Left lung (tissue), 14 donors: ENCODE measurements at regions of chr5 and their contacts with region 1.

Region 1: DNA sequence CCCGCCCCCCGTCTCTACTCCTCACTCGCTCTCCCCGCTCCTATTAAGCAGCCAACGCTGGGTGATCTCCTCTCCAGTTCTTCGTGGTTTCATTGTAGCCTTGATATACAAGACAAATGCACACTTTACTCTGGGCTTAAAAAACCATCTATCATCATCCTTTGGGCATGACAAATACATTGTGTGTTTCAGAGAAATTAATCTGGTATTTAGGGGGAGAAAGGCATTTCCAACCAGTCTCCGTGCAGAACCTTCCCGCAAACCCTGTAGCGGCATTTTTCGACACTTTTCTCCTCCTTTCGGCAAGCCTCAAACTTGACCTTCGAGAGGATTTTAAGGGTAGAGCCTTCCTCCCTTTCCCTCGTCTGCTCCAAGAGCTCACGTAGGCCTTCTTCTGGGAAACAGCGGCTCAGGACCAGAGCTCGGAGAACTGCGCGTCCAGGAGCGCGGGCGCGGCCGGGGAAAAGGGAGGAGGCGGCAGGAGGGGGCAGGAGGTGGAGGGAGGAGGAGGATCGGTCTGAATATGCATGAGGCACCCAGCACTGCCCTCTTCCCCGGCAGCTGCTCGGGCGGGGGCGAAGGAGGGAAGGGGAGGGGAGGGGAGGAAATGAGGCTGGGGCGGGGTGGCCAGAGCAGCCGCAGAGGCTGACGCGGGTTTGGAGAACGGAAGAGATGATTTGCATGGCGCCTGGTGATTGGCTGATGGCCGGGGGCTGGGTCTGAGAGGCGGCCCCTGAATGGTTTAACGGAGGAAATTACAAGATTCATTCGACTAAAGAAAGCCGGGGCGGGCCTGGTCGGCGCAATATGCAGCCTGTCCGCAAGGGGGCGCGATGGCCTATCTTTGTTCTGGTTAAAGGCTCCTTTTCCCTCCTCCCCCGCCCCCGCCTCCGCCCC is 127.5 kb downstream of the TMEM161B start:
- DNase-seq: peak; percentile 87 to 95 (median 92)
- ATAC-seq: peak; percentile 95
- H3K4me3 ChIP-seq: peak overlapping the region; percentile 18 to 38
- H3K27ac ChIP-seq: peak overlapping the region in 1 of 2 donors; percentile 37
- H3K4me1 ChIP-seq: peaks cover 5 to 25% of the 10 kb centered on the region in 2 donors
- H3K27me3 ChIP-seq: peaks cover 36 to 85% of the 10 kb centered on the region in 2 donors
- CTCF ChIP-seq: peak; percentile 44 to 65

Region 2: GRCh38 chr5:88680253-88681132 is 539.4 kb after region 1 on chr5:
- intact Hi-C with region 1: loop called in 1 of 2 experiments (anchors 10 kb)
- DNase-seq: peak in 3 of 4 donors; percentile 64 to 94 (median 69)
- ATAC-seq: peak; percentile 97
- H3K4me3 ChIP-seq: peak overlapping the region in 1 of 2 donors; percentile 30
- H3K27ac ChIP-seq: no peak overlapping the region
- H3K4me1 ChIP-seq: peaks cover 8 to 20% of the 10 kb centered on the region in 2 donors
- H3K27me3 ChIP-seq: peaks cover 96 to 100% of the 10 kb centered on the region in 2 donors
- CTCF ChIP-seq: peak; percentile 94 to 96